Heart left ventricle (tissue), 16 donors: ENCODE measurements at regions of chr5 and their contacts with region 1.

Region 1: DNA sequence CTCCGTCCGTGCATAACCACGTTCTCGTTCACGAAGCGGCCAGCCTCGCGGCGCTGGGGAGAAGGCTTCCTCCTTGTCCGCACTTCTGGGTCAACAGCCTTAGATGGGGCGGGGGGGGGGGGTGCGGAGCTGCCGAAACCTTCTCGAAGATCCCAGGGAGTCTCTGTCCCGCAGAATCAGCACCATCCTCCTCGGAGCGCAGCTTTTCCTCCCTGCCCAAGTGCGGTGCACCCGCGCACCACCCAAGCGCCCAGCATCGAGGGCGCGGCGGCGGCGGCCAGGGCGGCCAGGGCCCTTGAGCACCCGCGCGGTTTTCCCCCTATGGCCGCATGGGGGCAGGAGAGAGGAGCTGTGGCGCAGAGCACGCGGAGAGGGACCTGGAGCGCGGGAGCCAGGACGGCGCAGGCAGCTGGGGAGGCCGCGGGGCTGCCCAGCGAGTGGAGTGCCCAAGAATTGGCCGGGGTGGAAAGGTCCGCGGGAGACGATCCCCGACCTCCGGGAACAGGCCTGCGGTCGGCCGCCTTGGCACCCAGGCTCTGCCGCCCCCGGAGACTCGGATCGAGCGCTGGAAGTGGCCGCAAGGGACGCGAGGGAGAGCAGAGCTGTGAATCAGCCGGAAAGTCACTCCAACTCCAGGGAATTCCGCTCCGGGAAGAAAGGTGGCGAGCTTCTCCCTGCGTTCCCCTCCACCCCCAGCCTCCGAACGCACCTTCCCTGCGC is 43.1 kb downstream of the TMEM174 start:
- DNase-seq: peak; percentile 67 to 85 (median 68)
- ATAC-seq: peak; percentile 77 to 99 (median 98)
- H3K4me3 ChIP-seq: peak overlapping the region in 10 of 12 donors; percentile 24 to 50 (median 42)
- H3K27ac ChIP-seq: no peak overlapping the region
- H3K4me1 ChIP-seq: peaks cover 0 to 15% (median 8%) of the 10 kb centered on the region in 12 donors
- H3K27me3 ChIP-seq: peaks cover 7 to 96% (median 68%) of the 10 kb centered on the region in 9 donors
- CTCF ChIP-seq: peak; percentile 69 to 90 (median 82)
- POLR2A ChIP-seq: no peak

Region 2: DNA sequence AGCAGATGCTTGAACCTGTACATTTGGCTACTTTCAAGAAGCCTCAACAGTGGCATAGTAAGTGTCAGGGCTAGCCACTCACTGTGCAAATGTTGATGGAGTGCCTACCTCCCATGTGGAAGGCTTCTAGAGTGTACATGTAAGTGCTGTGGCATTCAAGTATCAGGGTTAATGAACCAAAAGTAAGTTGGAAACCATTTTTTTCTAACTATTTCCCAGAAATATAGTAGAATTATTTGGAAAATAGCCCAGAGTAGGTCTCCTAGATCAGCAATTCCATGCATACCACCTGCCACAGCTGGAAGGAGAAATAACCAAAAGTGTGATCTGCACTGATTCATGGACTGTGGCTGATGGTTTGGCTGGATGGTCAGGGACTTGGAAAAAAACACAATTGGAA is 179.2 kb after region 1 on chr5:
- intact Hi-C with region 1: no loop called
- DNase-seq: no peak
- ATAC-seq: no peak
- H3K4me3 ChIP-seq: no peak overlapping the region
- H3K27ac ChIP-seq: no peak overlapping the region
- H3K4me1 ChIP-seq: no peaks in the 10 kb centered on the region
- H3K27me3 ChIP-seq: peaks cover 0 to 53% (median 10%) of the 10 kb centered on the region in 9 donors
- CTCF ChIP-seq: no peak
- POLR2A ChIP-seq: no peak

Region 3: GRCh38 chr5:73448463-73449136 is 232.5 kb after region 1 on chr5 and contains the start of gene FOXD1:
- intact Hi-C with region 1: loop called in 9 of 10 experiments (anchors 2 to 5 kb)
- DNase-seq: peak; percentile 44 to 75 (median 59)
- ATAC-seq: peak in 3 of 4 donors; percentile 79 to 92 (median 86)
- H3K4me3 ChIP-seq: peak within 1 kb of the TSS; percentile 22 to 61 (median 46)
- H3K27ac ChIP-seq: no peak within 1 kb of the TSS
- H3K4me1 ChIP-seq: peaks cover 0 to 33% (median 16%) of the 10 kb centered on the region in 12 donors
- H3K27me3 ChIP-seq: peaks cover 83 to 89% (median 85%) of the 10 kb centered on the region in 9 donors
- CTCF ChIP-seq: peak in 1 of 12 donors; percentile 3
- POLR2A ChIP-seq: no peak
- total RNA-seq, gene FOXD1: 0.18 TPM in 1 of 9 donors, not detected in the others